AG04449 (cell line): ENCODE measurements at regions of chr12 and their contacts with region 1.

Region 1: DNA sequence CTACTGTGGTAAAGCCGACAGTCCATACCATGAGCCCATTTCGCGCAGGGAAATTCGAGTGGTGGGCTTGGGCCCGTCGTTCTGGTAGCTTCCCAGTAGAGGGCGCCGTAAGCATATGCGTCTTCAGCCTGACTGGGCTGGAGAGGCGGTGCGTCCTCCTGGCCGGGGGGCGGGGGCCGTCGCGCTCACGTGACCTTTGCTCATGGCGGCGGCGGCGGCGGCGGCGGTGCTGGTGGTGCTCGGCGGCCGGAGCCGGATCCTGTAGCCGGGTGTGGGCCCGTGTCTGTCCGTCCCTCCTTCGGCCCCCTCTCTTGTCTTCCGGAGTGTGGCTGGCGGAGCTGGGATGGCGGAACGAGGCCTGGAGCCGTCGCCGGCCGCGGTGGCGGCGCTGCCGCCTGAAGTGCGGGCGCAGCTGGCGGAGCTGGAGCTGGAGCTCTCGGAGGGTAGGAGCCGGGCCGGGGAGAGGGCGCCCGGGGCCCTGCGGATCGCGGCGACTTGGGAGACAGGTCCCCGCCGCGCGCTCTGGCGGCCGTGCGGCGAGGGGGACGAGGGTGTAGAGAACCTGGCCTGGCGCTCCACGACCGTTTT is at the start of gene DIP2B:
- DNase-seq: no peak
- H3K4me3 ChIP-seq: peak within 1 kb of the TSS; percentile 77
- CTCF ChIP-seq: peak; percentile 94

Region 2: DNA sequence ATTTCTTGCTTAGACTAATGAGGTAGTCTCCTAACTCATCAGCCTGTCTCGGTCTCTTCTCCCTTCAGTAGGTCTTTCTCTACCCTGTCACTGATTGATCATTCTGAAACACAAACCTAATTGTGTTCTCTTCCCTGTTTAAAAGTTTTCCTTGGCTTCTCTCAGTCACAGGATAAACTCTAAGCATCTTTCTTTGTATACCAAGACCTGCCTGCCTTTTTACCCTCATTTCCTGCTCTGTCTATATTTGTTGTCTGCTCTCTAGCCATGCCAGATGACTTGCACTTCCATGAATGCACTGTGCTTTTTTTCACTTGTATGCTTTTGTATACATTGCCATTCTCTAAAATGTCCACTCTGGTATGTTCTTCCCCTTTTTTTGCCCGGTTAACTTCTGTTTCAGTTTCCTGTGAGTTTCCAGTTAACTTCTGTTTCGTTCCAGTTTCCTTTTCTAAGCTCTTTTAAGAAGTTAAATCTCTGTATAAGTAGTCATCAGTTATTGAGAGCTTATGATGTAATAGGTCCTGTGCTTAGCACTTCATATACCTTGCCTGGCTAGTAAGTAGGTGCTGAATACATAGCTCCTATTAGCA is 12.7 kb after region 1 on chr12:
- CTCF ChIA-PET with region 1: interaction called, 14 read pairs
- POLR2A ChIA-PET with region 1: no interaction called
- DNase-seq: no peak
- H3K4me3 ChIP-seq: no peak overlapping the region
- CTCF ChIP-seq: no peak

Region 3: GRCh38 chr12:50620109-50620977 is 115.5 kb after region 1 on chr12:
- CTCF ChIA-PET with region 1: interaction called, 19 read pairs
- POLR2A ChIA-PET with region 1: no interaction called
- DNase-seq: peak; percentile 78
- H3K4me3 ChIP-seq: peak overlapping the region; percentile 16; the same call in 1 of the 2 replicates
- CTCF ChIP-seq: peak; percentile 18

Region 4: DNA sequence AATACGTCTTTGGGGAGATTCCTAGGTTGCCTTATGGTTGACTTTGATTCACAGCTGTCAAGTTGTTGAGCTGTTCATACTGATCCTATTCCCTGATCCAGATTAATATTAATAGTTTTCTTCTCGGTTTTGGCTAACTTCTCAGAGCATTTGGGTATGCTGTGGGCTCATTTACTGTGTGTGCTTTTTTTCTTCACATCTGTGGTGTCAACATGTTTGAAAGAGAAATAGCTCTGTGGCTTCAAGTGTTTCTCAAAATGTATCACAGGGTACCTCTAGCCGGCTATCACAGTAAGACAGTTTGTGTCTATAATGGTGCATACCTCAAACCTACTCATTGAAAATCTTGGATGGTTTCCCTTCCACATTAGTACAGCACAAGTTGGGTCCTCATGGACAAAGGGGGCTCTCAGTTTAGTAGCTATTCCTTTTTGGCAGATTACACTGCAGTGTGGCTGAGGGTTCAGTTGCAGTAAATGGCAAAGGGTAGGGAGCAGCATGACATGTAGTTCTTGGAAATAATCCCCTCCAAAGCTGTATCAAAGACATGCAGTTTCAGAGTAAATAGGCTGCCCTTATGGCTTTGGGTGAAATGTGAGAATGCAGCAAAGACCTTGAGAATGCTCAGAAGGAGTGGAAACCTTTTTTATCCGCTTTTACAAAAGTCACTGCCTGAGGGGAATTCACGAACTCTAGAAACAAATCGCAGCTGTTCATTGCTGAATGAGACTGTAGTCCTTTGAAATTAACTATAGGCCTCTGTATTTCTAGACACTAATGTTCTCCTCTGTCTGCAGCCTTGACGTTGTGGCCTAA is 156.6 kb after region 1 on chr12:
- CTCF ChIA-PET with region 1: interaction called, 13 read pairs
- POLR2A ChIA-PET with region 1: no interaction called
- DNase-seq: no peak
- H3K4me3 ChIP-seq: no peak overlapping the region
- CTCF ChIP-seq: no peak

Region 5: DNA sequence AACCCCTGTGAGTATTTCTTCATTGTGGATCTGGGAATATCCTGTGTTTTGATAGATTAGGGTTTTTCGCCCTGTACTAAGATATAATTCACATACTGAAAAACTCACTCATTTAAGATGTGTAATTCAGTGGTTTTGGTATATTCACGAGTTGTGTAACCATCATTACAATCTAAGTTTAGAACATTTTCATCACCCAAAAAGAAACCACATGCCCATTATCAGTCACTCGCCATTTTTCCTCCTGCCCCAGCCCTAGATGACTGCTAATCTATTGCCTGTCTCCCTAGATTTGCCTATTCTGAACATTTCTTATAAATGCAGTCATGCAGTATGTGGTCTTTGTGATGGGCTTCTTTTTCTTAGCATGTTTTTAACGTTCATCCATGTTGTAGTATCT is 191.1 kb after region 1 on chr12:
- CTCF ChIA-PET with region 1: interaction called, 41 read pairs
- POLR2A ChIA-PET with region 1: no interaction called
- DNase-seq: no peak
- H3K4me3 ChIP-seq: no peak overlapping the region
- CTCF ChIP-seq: no peak

Region 6: GRCh38 chr12:50734409-50735263 is 229.7 kb after region 1 on chr12:
- CTCF ChIA-PET with region 1: interaction called, 47 read pairs
- POLR2A ChIA-PET with region 1: no interaction called
- DNase-seq: no peak
- H3K4me3 ChIP-seq: no peak overlapping the region
- CTCF ChIP-seq: peak; percentile 61